ENCODE measurements at regions of chr15 and their contacts with region 1.

Region 1: GRCh38 chr15:92881802-92882696 is 18.1 kb upstream of the CHD2 start:
- DNase-seq: peak; percentile 100
- H3K4me3 ChIP-seq: peak overlapping the region; percentile 43 to 80
- H3K27ac ChIP-seq: peak overlapping the region; percentile 100
- H3K4me1 ChIP-seq: peaks cover 28% of the 10 kb centered on the region
- H3K27me3 ChIP-seq: no peaks in the 10 kb centered on the region
- CTCF ChIP-seq: no peak
- POLR2A ChIP-seq: peak in 1 of 2 donors; percentile 96

Region 2: GRCh38 chr15:92808978-92809879 is 72.8 kb before region 1 on chr15:
- intact Hi-C with region 1: loop called (anchors 2 kb)
- DNase-seq: peak in 1 of 2 donors; percentile 98
- H3K4me3 ChIP-seq: peak overlapping the region; percentile 62 to 70
- H3K27ac ChIP-seq: peak overlapping the region; percentile 99
- H3K4me1 ChIP-seq: peaks cover 42% of the 10 kb centered on the region
- H3K27me3 ChIP-seq: no peaks in the 10 kb centered on the region
- CTCF ChIP-seq: peak; percentile 78 to 98 (median 97)
- POLR2A ChIP-seq: peak in 1 of 2 donors; percentile 34

Region 3: DNA sequence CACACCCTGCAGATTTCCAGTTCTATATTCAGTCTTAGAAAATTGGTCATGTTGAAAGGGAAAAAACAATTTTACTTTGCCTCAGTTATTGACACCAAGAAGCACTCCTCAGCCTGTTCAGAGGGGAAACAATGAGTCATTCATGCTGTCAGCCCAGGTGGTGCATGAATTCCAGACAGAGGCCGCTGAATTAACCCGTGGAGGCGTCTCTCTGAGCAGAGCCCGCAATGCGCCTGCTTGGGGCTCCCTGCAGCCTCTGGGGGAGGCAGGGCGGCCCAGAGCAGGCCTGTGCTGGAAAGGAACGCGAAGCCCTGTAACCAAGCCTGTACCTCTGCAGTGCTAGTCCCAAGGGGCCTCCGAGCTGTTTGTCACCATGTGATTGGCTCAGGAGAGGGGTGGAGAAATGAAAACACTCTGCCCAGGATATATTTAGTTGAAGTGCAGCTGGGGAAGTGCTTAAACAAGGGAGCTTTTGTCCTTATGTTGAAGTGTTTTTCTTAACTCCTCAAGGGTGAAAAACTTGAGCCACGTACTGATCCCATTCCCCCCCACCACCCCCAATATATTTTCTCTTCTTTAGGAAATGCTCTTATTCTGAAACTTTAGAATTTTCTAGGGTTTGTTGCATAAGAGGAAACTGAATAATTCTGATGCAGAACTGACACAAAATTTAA is 50.3 kb before region 1 on chr15:
- intact Hi-C with region 1: loop called (anchors 2 kb)
- DNase-seq: peak in 1 of 2 donors; percentile 96
- H3K4me3 ChIP-seq: peak overlapping the region; percentile 21 to 41
- H3K27ac ChIP-seq: peak overlapping the region; percentile 92
- H3K4me1 ChIP-seq: peaks cover 29% of the 10 kb centered on the region
- H3K27me3 ChIP-seq: no peaks in the 10 kb centered on the region
- CTCF ChIP-seq: no peak
- POLR2A ChIP-seq: peak in 1 of 2 donors; percentile 46

Region 4: GRCh38 chr15:92845126-92845508 is 36.9 kb before region 1 on chr15:
- intact Hi-C with region 1: no loop called
- DNase-seq: no peak
- H3K4me3 ChIP-seq: no peak overlapping the region
- H3K27ac ChIP-seq: no peak overlapping the region
- H3K4me1 ChIP-seq: peaks cover 16% of the 10 kb centered on the region
- H3K27me3 ChIP-seq: no peaks in the 10 kb centered on the region
- CTCF ChIP-seq: no peak
- POLR2A ChIP-seq: no peak

Region 5: GRCh38 chr15:92903941-92904831 is 22.1 kb after region 1 on chr15:
- intact Hi-C with region 1: loop called (anchors 2 kb)
- DNase-seq: peak; percentile 99 to 100
- H3K4me3 ChIP-seq: peak overlapping the region; percentile 50 to 55
- H3K27ac ChIP-seq: peak overlapping the region; percentile 97
- H3K4me1 ChIP-seq: peaks cover 71% of the 10 kb centered on the region
- H3K27me3 ChIP-seq: no peaks in the 10 kb centered on the region
- CTCF ChIP-seq: no peak
- POLR2A ChIP-seq: peak; percentile 51 to 84

Region 6: DNA sequence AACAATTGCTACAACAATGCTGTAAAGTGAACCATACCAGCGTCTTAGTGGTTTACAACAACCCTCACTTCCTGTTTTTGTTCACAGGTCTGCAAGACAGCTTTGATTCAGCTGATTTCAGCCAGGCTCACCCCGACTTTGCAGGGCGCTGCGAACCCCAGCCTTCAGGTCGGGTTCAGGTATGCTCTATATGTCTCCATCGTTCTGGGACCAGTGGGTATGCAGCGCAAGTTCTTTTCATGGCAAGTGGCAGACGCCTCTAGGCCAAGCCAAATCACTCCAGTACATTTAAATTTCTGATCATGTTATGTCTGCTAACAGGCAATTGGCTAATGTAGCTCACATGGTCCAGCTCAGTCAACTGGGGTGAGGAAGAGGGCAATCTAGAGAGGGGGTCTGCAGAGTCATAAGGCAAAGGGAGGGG is 259.3 kb after region 1 on chr15:
- intact Hi-C with region 1: no loop called
- DNase-seq: no peak
- H3K4me3 ChIP-seq: no peak overlapping the region
- H3K27ac ChIP-seq: no peak overlapping the region
- H3K4me1 ChIP-seq: no peaks in the 10 kb centered on the region
- H3K27me3 ChIP-seq: no peaks in the 10 kb centered on the region
- CTCF ChIP-seq: no peak
- POLR2A ChIP-seq: no peak